ENCODE measurements at regions of chr5 and their contacts with region 1.

Region 1: GRCh38 chr5:123807177-123807945 is 295.4 kb downstream of the CSNK1G3 start:
- DNase-seq: no peak

Region 2: DNA sequence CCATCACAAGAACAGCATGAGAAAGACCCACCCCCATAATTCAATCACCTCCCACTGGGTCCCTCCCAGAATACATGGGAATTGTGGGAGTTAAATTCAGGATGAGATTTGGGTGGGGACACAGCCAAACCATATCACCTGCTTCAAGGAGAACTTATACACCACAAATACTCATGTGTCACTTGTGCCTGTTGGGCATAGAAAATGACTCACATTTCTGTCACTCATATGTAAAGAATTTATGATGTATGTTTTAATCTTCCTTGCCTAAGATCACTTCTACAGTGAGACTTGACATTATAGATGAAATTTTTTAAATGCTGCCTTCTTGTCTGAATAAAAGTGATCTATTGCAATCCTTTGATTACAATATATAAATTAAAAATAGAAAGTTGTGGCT is 741.3 kb before region 1 on chr5:
- intact Hi-C with region 1: no loop called
- DNase-seq: no peak

Region 3: GRCh38 chr5:123571927-123572326 is 235.4 kb before region 1 on chr5:
- intact Hi-C with region 1: no loop called
- DNase-seq: no peak

Region 4: DNA sequence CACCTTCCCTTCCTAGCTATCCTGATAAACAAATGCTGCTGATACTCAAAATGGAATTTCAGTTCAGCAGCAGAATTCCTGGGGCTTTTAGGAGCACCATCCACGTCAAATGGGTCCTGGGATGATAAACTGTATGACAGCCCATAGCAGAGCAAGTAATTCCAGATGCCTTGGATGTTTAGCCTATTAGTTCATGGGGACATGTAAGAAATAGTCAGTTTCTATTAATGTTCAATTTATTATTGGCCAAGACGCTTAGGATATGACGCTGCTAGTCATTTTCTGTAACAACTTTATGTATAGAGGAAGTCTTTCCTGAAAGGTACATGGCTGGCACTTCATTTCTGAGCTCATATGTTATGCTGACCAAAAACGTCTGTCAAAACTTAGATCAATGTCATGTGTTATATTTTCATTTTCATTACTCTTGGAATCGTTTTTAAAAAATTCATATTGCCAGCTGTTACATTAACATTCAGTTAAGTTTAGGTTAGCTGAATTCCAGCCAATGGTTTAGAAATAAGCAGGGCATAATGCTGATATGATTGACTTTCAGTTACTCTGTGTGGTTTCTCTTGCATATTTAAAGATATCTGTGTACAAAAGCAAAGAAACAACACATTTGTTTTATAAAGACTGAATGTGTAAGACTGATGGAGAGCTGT is 51.6 kb before region 1 on chr5:
- intact Hi-C with region 1: loop called (anchors 2 kb)
- DNase-seq: no peak

Region 5: GRCh38 chr5:124034963-124035362 is 227.6 kb after region 1 on chr5:
- intact Hi-C with region 1: no loop called
- DNase-seq: no peak

Region 6: DNA sequence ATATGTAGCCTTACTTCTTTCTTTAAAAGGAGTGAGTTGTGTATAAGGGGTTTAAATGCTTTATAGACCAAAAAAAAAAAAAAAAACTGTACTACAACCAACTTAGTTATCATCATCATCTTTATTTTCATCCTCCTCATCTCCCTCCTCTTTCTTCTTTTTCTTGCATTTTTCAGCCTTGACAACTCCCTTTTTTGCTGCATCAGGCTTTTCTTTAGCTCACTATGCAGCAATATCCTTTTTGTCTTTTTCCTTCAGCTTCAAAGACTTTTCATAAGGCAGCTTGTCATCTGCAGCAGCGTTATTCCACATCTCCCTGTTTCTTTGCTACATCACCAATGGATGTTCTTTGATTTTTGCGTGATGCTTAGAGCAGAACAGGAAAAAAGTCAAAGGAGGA is 413.1 kb after region 1 on chr5:
- intact Hi-C with region 1: no loop called
- DNase-seq: no peak